H1 (cell line): ENCODE measurements at regions of chr7 and their contacts with region 1.

Region 1: GRCh38 chr7:140517546-140518369 is 38.5 kb upstream of the MKRN1 start:
- DNase-seq: peak; percentile 93 to 95
- H3K4me3 ChIP-seq: no peak overlapping the region
- H3K27ac ChIP-seq: no peak overlapping the region
- H3K4me1 ChIP-seq: peaks cover 2 to 6% (median 3%) of the 10 kb centered on the region in 4 experiments; a peak in 3 of 7 replicates
- H3K27me3 ChIP-seq: no peaks in the 10 kb centered on the region
- CTCF ChIP-seq: peak; percentile 93 to 98 (median 96)
- EP300 ChIP-seq: no peak
- POLR2A ChIP-seq: no peak
- RAD21 ChIP-seq: peak; percentile 93 to 99

Region 2: DNA sequence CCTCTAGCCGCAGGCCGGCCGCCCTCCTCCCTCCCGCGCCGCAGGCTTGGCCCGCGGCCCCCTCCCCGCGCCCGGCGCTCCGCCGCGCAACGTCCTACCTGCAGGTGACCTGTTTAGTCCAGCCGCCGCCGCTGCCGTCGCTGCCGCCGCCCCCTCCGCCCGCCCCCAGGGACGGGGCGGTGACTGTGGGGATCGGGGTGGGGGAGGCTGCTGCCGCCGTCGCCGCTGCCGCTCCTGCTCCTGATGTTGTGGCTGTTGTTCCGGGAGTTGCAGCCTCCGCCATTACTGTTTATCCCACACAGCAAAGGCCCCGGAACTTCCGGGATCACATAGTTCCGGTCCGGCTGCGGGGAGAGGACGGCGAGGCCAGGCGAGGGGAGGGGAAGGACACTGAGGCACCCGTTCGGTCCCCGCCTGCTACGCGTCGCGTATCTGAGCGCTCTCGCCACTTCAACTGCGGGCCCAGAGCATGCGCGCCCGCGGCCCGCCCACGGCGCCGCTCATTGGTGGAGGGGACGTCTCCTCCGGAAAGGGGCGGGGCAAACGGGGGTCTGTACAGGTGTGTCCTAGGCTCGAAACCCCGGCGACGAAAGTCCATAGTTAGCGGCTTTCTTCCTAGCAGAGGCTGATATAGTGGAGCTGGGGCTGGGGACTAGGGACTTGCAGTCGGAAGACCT is 38.6 kb before region 1 on chr7 and contains the start of gene MKRN1:
- CTCF ChIA-PET with region 1: interaction called, 24 read pairs
- POLR2A ChIA-PET with region 1: interaction called, 3 read pairs
- DNase-seq: peak; percentile 94 to 97
- H3K4me3 ChIP-seq: peak within 1 kb of the TSS; percentile 84 to 96 (median 88)
- H3K27ac ChIP-seq: peak within 1 kb of the TSS; percentile 85
- H3K4me1 ChIP-seq: peaks cover 0 to 12% (median 5%) of the 10 kb centered on the region in 4 experiments; a peak in 3 of 7 replicates
- H3K27me3 ChIP-seq: no peaks in the 10 kb centered on the region
- CTCF ChIP-seq: no peak
- EP300 ChIP-seq: no peak
- POLR2A ChIP-seq: peak; percentile 21 to 69
- RAD21 ChIP-seq: no peak
- total RNA-seq, gene MKRN1: 94.6 and 99.6 TPM in 2 replicates

Region 3: DNA sequence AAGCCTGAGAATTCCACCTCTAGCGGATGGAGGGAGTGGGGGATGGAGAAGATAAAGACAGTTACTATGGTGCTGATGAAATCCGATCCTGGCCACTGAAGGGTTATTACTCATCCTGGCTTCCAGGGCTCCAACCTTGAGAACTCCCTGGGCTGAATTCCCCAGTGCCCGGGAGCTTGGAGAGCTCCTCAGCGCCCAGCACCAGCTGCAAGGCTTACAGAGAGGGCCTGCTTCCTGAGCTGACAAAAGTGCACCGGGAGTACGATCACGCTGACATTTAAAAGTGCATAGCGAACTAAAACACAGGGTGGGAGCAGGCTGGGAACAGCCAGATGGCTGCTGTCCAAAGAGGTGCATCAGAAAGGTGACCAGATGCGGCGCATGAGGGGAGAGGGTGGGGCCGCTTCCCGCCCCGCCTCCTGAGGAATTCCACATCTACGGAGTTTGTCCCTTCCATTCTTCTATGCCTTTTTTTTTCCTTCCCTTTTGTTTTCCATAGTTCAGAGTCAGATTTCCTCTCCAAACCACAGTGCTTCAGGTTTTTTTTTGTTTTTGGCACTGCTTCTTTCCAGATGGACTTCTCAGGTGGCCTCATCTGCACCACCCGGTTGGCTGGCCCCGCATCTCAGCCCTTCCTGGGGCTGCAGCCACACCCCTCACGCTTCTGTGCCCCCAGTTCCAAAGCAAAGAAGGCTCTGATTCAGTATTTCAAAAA is 23.9 kb after region 1 on chr7:
- CTCF ChIA-PET with region 1: interaction called, 10 read pairs
- POLR2A ChIA-PET with region 1: interaction called, 3 read pairs
- DNase-seq: peak; percentile 66 to 74
- H3K4me3 ChIP-seq: peak overlapping the region; percentile 1 to 48 (median 32); a peak in 6 of 8 replicates
- H3K27ac ChIP-seq: peak overlapping the region; percentile 85
- H3K4me1 ChIP-seq: peaks cover 6 to 22% (median 8%) of the 10 kb centered on the region in 4 experiments
- H3K27me3 ChIP-seq: no peaks in the 10 kb centered on the region
- CTCF ChIP-seq: no peak
- EP300 ChIP-seq: no peak
- POLR2A ChIP-seq: peak in 1 of 2 experiments; percentile 62; a peak in 1 of 3 replicates
- RAD21 ChIP-seq: no peak; a peak in 1 of 4 replicates

Region 4: DNA sequence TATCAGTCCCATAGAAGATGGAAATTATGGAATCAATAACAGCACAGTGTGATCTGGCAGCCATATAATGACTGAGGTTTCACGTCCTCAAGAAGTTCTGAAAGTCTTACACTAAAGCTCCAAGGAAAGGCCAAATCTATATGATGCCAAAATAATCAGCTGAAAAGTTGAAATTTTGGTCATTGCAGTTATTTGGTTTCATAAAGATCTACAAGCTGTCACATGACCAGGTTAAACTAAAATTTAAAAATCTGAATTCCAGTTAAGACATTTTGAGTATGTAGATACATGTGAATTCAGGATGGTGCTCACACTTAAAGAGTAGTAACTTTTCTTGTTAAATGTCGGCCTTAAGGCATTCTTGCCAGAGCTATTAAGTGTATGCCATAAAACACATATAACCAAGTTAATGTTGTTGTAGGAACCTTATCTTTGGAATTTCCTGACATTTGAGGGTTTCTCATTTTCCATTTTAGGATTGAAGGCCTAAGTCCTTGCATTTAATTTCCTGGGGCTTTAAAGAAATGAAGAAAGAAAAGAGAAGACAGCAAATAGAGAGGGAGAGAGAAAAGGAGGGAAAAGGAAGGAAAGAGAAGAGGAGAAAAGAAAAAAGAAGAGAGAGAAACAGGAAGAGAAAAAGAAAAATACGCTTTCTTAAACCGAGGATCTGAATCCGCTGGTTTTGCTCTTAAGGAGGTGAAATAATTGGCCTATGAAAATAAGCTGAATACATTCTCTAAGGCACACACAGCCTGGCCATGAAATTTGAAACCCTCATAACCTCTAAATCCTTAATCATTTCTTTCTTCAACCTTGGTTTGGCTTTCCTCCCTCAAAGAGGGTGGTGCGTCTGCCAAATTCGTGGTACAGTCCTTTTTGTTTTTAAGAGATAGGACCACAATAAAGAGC is 79.0 kb after region 1 on chr7:
- CTCF ChIA-PET with region 1: interaction called, 15 read pairs
- POLR2A ChIA-PET with region 1: no interaction called
- DNase-seq: no peak
- H3K4me3 ChIP-seq: no peak overlapping the region
- H3K27ac ChIP-seq: no peak overlapping the region
- H3K4me1 ChIP-seq: no peaks in the 10 kb centered on the region
- H3K27me3 ChIP-seq: no peaks in the 10 kb centered on the region
- CTCF ChIP-seq: no peak
- EP300 ChIP-seq: no peak
- POLR2A ChIP-seq: no peak
- RAD21 ChIP-seq: no peak

Region 5: DNA sequence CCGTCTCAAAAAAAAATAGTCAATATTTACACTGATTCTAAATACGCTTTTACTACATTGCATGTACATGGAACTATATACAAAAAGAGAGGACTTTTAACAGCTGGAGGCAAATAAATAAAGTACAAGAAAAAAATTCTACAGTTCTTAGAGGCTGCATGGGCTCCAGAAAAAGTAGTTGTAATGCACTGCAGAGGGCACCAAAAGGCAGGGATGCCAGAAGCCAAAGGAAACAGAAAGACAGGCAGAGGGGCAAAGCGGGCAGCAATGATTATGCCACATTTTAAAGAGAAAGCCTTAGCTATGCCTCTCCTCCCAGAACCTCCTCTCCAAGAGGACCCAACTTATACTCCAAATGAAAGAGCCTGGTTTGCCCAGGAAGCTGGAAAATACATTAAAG is 143.4 kb after region 1 on chr7:
- CTCF ChIA-PET with region 1: interaction called, 12 read pairs
- POLR2A ChIA-PET with region 1: no interaction called
- DNase-seq: no peak
- H3K4me3 ChIP-seq: no peak overlapping the region
- H3K27ac ChIP-seq: no peak overlapping the region
- H3K4me1 ChIP-seq: peaks cover 0 to 3% (median 1%) of the 10 kb centered on the region in 4 experiments; a peak in 2 of 7 replicates
- H3K27me3 ChIP-seq: no peaks in the 10 kb centered on the region
- CTCF ChIP-seq: no peak; a peak in 1 of 4 replicates
- EP300 ChIP-seq: no peak
- POLR2A ChIP-seq: no peak
- RAD21 ChIP-seq: peak; percentile 29 to 56